Heart left ventricle (tissue), 16 donors: ENCODE measurements at regions of chr11 and their contacts with region 1.

Region 1: DNA sequence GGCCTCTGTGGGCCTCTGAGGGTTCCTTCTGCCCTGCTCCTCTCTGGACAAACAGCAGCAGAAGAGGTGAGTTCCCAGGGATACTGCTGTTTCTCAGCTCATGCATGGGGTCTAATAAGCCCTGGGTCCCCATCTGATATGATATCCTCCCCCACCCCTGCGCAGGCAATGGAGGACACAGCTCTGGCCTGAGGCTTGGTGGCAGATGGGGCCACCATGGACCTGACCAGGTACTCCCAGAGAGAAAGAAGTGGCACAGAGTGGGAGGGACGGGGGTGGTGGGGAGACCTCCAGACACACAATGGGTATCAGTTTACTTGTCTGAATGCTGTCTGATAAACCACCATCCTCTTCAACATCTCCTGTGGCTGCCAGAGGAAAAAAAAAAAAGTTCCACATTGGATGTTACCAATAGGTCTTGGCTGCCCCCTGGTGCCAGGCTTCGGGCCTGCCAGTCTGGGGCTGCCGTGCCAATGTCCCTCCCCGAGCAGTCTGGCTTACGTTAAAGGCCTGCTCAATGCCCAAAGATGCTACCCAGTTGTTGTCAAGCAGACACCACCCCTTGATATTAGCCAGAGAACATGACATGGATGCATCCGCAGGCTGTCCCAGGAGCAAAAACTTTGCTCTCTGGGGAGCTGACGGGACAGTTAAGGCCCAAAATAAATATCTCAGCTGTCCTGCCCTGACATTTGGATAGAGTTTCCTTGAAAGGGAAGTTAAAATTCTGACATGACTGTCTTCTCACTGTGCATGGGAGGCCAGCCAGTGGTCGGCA is 27.9 kb upstream of the ABCC8 start:
- DNase-seq: peak; percentile 73 to 86 (median 77)
- ATAC-seq: peak; percentile 59 to 79 (median 71)
- H3K4me3 ChIP-seq: no peak overlapping the region
- H3K27ac ChIP-seq: no peak overlapping the region
- H3K4me1 ChIP-seq: peaks cover 0 to 19% (median 12%) of the 10 kb centered on the region in 12 donors
- H3K27me3 ChIP-seq: peaks cover 0 to 1% (median 0%) of the 10 kb centered on the region in 9 donors
- CTCF ChIP-seq: peak; percentile 80 to 94 (median 90)
- POLR2A ChIP-seq: no peak

Region 2: DNA sequence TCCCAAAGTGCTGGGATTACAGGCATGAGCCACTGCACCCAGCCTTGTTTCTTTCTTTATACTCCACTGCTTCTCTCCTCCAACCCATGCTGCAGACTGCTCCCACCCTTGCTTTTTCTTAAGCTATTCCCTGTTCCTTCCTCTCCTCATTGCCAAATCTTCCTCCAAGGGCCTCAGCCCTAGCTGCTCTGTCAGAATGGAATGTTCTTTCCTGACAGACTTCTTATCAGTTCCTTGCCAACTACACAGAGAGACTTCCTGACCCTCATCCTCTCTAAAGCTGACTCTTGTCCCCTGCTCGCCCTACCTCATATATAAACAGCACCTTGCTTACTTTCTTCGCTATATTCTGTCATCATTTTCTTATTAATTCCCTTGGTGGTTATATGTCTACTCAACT is 279.8 kb before region 1 on chr11:
- intact Hi-C with region 1: loop called in 1 of 10 experiments (anchors 5 kb)
- DNase-seq: no peak
- ATAC-seq: peak; percentile 56 to 79 (median 70)
- H3K4me3 ChIP-seq: peak overlapping the region in 1 of 12 donors; percentile 6
- H3K27ac ChIP-seq: peak overlapping the region in 5 of 12 donors; percentile 9 to 63 (median 38)
- H3K4me1 ChIP-seq: peaks cover 0 to 9% (median 0%) of the 10 kb centered on the region in 12 donors
- H3K27me3 ChIP-seq: no peaks in the 10 kb centered on the region
- CTCF ChIP-seq: no peak
- POLR2A ChIP-seq: no peak

Region 3: DNA sequence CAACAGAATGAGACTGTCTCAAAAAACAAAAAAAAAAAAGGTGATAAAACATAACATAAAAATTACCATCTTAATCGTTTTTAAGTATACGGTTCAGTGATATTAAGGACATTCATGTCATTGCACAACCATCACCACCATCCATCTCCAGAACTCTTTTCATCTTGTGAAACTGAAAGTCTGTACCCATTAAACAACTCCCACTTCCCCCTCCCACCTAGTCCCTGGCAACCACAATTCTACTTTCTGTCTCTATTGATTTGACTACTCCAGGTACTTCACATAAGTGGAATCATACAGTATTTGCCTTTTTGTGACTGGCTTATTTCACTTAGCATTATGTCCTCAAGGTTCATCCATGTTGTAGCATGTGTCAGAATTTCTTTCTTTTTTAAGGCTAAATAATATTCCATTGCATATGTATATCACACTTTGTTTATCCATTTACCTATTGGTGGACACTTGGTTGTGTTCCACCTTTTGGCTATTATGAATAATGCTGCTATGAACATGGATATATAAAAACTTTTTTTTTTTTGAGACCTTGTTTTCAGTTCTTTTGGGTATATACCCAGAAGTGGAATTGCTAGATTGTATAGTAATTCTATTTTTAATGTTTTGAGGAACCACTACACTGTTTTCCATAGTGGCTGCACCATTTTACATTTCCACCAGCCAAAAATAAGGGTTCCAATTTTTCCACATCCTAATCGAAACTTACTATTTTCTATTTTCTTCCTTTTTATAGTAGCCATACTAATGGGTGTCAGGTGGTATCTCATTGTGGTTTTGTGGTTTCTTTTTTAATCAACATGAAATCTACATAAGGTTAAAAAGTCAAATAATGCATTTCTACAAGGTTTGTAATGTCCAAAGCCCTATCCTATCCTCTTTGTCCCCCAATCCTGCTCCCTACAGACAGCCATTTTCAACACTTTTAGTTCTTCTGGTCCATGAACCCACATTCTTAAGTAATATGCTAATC is 273.4 kb before region 1 on chr11:
- intact Hi-C with region 1: loop called in 5 of 10 experiments (anchors 2 to 10 kb)
- DNase-seq: no peak
- ATAC-seq: no peak
- H3K4me3 ChIP-seq: no peak overlapping the region
- H3K27ac ChIP-seq: no peak overlapping the region
- H3K4me1 ChIP-seq: peaks cover 0 to 7% (median 0%) of the 10 kb centered on the region in 12 donors
- H3K27me3 ChIP-seq: no peaks in the 10 kb centered on the region
- CTCF ChIP-seq: no peak
- POLR2A ChIP-seq: no peak

Region 4: DNA sequence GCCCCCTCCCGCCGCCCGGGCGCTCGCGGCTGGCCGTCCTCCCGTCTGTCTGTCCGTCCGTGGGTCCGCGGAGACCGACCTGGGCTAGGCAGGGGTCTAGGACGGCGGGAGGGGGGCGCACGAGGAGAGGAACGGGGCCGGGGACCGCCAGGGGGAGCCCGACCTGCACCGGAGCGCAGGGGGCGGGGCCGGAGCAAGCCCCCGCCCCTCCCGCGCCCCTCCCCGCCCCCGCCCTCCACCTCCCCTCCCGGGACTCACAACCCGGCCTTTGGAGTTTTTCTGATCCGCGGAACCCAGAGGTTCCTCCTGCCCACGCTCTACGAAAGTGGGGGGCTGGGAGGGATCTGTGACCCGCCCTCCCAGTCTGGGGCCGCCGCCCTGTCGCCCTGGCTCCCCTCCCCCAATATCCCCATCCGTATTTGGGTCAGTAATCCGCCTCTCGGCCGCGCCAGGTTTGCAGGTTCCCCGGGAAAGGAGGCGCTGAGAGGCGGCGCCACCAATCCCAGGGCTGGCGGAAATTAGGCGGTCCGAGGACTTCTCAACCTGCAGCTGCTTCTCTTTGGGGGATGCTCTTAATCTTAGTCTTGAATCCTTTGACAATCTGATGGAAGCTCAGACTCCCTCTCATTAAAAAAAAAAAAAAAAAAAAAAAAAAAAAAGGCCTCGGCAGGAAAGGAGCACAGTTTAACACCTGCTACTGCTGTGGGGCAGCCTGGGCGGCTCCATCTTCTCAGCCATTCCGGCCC is 115.1 kb before region 1 on chr11:
- intact Hi-C with region 1: loop called (anchors 1 to 2 kb)
- DNase-seq: peak; percentile 67 to 84 (median 75)
- ATAC-seq: peak; percentile 19 to 76 (median 59)
- H3K4me3 ChIP-seq: peak overlapping the region; percentile 15 to 68 (median 56)
- H3K27ac ChIP-seq: peak overlapping the region in 10 of 12 donors; percentile 8 to 77 (median 50)
- H3K4me1 ChIP-seq: peaks cover 0 to 36% (median 10%) of the 10 kb centered on the region in 12 donors
- H3K27me3 ChIP-seq: peaks cover 0 to 15% (median 0%) of the 10 kb centered on the region in 9 donors
- CTCF ChIP-seq: peak; percentile 48 to 90 (median 78)
- POLR2A ChIP-seq: no peak